ENCODE measurements at regions of chr3 and their contacts with region 1.

Region 1: DNA sequence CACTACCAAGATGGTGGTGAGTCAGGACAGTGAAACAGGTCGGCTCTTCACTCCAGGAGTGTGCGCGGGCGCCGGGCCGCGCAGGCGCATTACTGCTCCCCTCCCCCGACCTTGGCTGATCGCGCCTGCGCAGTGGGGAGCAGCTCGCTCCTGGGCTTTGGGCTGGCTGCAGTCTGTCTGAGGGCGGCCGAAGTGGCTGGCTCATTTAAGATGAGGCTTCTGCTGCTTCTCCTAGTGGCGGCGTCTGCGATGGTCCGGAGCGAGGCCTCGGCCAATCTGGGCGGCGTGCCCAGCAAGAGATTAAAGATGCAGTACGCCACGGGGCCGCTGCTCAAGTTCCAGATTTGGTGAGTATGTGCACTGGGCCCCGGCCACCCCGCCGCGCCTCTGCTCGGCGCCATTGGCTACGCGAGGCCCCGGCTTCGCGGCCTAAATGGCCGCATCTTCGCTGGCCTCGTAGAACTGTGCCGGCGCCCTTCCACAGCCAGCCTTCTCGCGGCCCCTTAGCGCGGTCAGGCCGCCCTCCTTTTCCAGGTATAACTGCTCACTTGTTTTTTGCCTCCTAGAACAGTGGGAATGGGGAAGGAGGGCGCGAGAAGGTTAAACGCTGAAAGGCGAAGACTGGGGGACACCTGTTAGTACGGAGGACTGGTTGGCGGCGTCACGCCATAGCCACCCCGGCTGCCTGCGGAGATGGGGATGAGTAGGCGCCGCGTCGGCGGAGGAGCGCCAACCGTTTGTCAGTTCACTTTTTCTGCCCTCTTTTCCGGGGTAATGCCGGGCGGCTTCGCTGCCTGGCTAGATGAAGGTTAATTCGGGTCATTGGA is at the start of gene SELENOT:
- DNase-seq: peak; percentile 92
- ATAC-seq: peak; percentile 90
- H3K4me3 Mint-ChIP-seq: peak within 1 kb of the TSS; percentile 91
- H3K27ac Mint-ChIP-seq: peak within 1 kb of the TSS; percentile 97
- H3K4me1 Mint-ChIP-seq: peaks cover 58% of the 10 kb centered on the region
- H3K27me3 Mint-ChIP-seq: no peaks in the 10 kb centered on the region
- CTCF ChIP-seq: peak; percentile 32
- total RNA-seq, gene SELENOT: 77.6 to 89.8 TPM

Region 2: DNA sequence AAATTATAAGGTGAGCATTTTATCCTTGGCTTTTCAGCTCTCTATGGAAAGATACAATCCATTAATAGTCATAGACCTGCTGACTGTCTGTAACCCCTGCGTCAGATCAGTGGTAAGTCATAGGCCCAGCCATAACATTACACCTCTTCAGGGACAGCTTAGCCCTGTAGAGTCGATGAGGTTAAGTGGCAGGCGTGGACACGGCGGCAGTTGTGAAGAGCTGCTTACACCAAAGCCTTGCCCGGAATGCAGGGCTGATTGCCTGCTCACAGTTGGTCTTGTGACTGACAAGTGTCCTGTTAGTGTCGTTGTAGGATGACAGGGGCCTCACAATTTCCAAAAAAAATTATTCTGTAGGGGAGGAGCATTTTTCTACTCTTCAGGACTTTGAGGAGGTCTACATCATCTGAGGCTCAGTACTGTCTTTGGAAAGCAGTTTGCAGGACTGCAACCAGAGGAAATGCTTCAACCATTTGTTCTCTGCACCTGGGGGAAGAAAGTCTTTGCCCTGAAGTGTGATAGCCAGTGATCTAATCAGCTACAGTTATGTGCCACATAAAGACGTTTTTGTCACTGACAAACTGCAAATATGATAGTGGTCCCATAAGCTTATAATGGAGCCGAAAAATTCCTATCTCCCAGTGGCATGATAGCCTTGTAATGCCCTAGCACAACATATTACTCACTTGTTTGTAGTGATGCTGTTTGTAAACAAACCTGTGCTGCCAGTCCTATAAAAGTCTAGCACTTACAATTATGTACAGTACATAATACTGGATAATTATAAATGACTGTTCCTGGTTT is 15.1 kb before region 1 on chr3:
- CTCF ChIA-PET with region 1: interaction called, 6 read pairs
- POLR2A ChIA-PET with region 1: interaction called, 19 read pairs
- intact Hi-C with region 1: no loop called
- DNase-seq: no peak
- ATAC-seq: no peak
- H3K4me3 Mint-ChIP-seq: no peak overlapping the region
- H3K27ac Mint-ChIP-seq: peak overlapping the region; percentile 32
- H3K4me1 Mint-ChIP-seq: peaks cover 16% of the 10 kb centered on the region
- H3K27me3 Mint-ChIP-seq: no peaks in the 10 kb centered on the region
- CTCF ChIP-seq: no peak

Region 3: GRCh38 chr3:150703299-150704134 is 100.2 kb after region 1 on chr3 and contains the start of gene ERICH6:
- CTCF ChIA-PET with region 1: interaction called, 3 read pairs
- POLR2A ChIA-PET with region 1: interaction called, 9 read pairs
- intact Hi-C with region 1: loop called (anchors 5 kb)
- DNase-seq: peak; percentile 92
- ATAC-seq: peak; percentile 96
- H3K4me3 Mint-ChIP-seq: peak within 1 kb of the TSS; percentile 91
- H3K27ac Mint-ChIP-seq: peak within 1 kb of the TSS; percentile 96
- H3K4me1 Mint-ChIP-seq: peaks cover 37% of the 10 kb centered on the region
- H3K27me3 Mint-ChIP-seq: no peaks in the 10 kb centered on the region
- CTCF ChIP-seq: peak; percentile 10
- total RNA-seq, gene ERICH6: not detected

Measured in activated CD8-positive, alpha-beta T cell treated with anti-CD3 and anti-CD28 coated beads for 36 hours (primary cell).